ENCODE measurements at regions of chr1 and their contacts with region 1.

Region 1: GRCh38 chr1:114282751-114283403 is 129.2 kb upstream of the SYT6 start:
- DNase-seq: peak; percentile 85
- H3K27ac ChIP-seq: no peak overlapping the region
- CTCF ChIP-seq: peak; percentile 89

Region 2: DNA sequence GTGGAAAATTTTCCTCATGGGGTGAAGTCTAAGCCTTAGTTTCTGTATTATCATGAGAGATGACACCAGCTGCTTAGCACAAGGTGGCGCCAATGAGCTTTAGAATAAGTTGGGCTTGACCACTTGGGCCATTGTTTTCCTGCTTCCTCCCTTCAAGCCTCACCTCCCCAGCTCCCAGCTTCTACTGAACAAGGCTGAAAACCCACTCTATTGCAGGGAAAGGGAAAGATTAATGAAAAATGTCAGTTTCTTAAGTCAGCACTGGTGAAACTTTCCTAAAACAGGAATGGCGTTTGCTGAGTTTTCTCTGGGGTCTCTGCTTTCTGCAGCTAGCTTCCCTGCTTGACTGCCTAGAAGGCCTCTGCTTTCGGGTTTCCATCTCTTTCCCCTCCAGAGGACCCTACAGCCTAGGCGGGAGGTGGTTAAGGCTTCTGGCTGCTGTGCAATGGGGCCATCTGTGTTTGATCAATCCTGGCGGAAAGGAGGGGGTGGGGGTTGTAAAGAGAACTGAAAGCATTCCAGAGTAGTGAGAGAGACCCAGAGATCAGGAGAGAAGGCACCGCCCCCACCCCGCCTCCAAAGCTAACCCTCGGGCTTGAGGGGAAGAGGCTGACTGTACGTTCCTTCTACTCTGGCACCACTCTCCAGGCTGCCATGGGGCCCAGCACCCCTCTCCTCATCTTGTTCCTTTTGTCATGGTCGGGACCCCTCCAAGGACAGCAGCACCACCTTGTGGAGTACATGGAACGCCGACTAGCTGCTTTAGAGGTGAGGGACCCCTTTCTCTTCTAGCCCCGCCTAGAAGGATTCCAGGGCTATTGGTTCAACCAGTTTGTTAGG is 303.8 kb before region 1 on chr1 and contains the start of gene OLFML3:
- CTCF ChIA-PET with region 1: interaction called, 27 read pairs
- POLR2A ChIA-PET with region 1: no interaction called
- DNase-seq: peak; percentile 90
- H3K27ac ChIP-seq: 0 out of 2 replicates have a peak within 1 kb of the TSS, but pooled peaks have one; percentile 10
- CTCF ChIP-seq: peak; percentile 73

Region 3: DNA sequence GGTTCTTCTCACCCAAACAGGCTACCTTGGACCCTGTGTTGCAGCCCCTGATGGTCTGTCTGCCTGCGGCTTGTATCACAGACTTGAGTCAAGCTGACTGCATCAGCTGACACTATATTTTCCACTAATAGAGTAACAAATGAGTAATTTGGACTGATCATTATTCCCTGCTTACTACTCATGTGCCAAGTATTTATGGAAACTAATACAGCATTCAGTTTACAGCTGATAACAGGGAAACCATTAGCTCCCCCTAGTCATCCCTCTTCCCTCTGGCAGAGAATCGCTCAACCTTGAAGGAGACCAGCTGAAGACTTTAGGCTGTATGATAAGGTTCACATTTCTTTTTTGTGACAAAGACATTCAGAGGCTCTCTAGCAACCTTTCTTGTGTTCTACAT is 12.6 kb before region 1 on chr1:
- CTCF ChIA-PET with region 1: interaction called, 33 read pairs
- POLR2A ChIA-PET with region 1: no interaction called
- DNase-seq: no peak
- H3K27ac ChIP-seq: no peak overlapping the region
- CTCF ChIP-seq: no peak